Dorsolateral prefrontal cortex (tissue), 120 donors: ENCODE measurements at regions of chr17 and their contacts with region 1.

Region 1: DNA sequence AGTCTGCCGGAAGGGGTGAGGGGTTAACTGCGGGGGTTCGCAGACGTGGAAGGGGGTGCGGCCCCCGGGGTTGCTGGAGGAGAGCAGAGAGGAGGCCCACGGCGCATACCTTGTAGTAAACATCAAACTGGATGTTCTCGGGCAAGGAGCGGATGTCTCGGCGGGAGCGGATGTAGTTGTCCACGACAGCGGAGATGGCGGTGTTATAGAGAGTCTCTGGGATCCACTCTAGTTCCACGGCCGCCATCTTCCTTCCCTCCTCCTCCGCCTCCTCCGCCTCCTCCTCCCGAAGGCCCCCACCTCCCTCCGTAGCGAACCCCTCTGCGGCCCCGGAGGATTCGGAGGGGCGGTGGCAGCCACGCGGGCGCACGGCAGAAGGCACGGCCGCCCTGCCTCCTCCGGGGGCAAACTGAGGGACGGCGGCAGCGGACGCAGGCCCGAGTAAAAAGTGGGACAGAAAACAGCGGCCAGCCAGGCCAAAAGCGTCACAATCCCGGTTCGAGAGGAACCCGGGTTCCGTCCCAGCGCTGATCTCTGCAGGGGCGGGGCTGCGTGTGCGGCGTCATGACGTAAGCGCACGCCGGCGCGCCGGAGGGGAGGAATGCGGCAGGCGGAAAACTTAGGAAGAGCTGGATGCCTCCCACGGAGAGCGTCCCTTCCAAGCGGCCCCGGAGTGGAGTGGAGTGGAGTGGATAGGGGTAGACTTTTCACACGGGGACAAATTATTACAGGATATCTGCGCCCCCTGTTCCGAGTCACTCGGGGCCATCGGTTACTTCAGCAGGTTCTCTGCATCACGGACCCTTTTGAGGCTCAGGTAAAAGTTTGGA is at the start of gene APPBP2:
- DNase-seq: peak; percentile 78 to 92 (median 88)
- H3K4me3 ChIP-seq: peak within 1 kb of the TSS; percentile 70 to 99 (median 93)
- H3K27ac ChIP-seq: peak within 1 kb of the TSS; percentile 76 to 100 (median 99)
- H3K27me3 ChIP-seq: no peaks in the 10 kb centered on the region
- CTCF ChIP-seq: peak in 17 of 56 donors; percentile 5 to 48 (median 25)
- total RNA-seq, gene APPBP2: 44.7 to 85.8 (median 66.2) TPM

Region 2: GRCh38 chr17:60442271-60443173 is 83.4 kb before region 1 on chr17:
- intact Hi-C with region 1: loop called in 1 of 2 experiments (anchors 5 kb)
- DNase-seq: no peak
- H3K4me3 ChIP-seq: peak overlapping the region in 27 of 59 donors; percentile 0 to 39 (median 10)
- H3K27ac ChIP-seq: peak overlapping the region; percentile 40 to 97 (median 87)
- H3K27me3 ChIP-seq: no peaks in the 10 kb centered on the region
- CTCF ChIP-seq: peak in 9 of 56 donors; percentile 9 to 31 (median 16)

Region 3: GRCh38 chr17:60568561-60568960 is 42.7 kb after region 1 on chr17:
- intact Hi-C with region 1: loop called (anchors 5 kb)
- DNase-seq: no peak
- H3K4me3 ChIP-seq: no peak overlapping the region
- H3K27ac ChIP-seq: peak overlapping the region in 1 of 59 donors; percentile 83
- H3K27me3 ChIP-seq: no peaks in the 10 kb centered on the region
- CTCF ChIP-seq: no peak

Region 4: GRCh38 chr17:60586288-60586974 is 60.5 kb after region 1 on chr17:
- intact Hi-C with region 1: no loop called
- DNase-seq: no peak
- H3K4me3 ChIP-seq: no peak overlapping the region
- H3K27ac ChIP-seq: no peak overlapping the region
- H3K27me3 ChIP-seq: no peaks in the 10 kb centered on the region
- CTCF ChIP-seq: peak in 24 of 56 donors; percentile 10 to 40 (median 24)